Activated naive CD8-positive, alpha-beta T cell treated with anti-CD3 and anti-CD28 coated beads, Interleukin-2, amount 10 ng/mL, durations not matched to agents 7 days and 5 days (primary cell): ENCODE measurements at regions of chr10 and their contacts with region 1.

Region 1: GRCh38 chr10:97792141-97792721 is 20.4 kb upstream of the SFRP5 start:
- DNase-seq: peak; percentile 78
- ATAC-seq: peak; percentile 35
- H3K4me3 Mint-ChIP-seq: no peak overlapping the region
- H3K27ac Mint-ChIP-seq: peak overlapping the region; percentile 80
- H3K4me1 Mint-ChIP-seq: peaks cover 27% of the 10 kb centered on the region
- H3K27me3 Mint-ChIP-seq: no peaks in the 10 kb centered on the region

Region 2: DNA sequence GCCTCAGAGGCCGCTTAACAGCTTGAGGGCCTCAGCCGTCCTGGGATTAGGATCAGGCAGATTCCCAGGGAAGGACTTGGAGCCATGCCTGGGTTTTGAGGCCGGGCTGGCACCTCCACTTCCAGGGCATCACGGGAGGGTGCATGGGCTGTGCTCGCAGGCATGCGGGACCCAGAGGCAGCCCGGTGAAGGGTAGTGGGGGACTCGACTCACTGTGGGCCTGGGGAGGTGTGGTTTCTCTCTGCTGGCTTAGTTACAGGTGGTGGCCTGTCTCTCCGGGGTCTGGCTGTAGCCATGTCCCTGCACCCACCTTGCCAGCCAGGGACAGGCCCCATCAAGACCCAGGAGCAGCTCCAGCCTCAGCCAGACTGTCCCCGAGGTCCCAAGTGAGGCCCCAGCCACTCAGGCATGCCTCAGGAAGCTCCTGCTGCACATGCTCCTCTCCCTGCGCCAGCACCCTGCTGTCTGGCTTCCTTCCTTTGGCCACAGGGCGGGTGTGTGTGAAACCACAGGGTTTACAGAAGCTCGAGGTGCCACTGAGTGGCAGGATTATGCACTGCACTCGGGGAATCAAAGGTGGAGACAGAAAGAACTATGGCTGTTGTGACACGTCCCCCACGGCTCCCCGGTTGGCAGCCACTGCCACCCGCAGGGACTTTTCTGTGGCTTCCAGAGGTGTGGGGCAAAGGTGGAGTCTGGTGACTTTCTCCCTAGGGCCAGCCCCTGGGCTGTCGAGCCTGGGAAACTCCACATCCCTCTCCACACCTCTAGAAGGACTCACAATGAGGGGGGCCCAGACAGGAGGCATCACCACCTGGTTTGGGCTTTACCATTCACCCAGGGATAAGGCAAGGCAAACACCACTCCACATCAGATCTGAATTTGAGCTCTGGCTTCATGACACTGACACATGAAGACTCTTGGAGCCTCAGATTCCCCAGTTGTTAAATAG is 77.1 kb after region 1 on chr10:
- POLR2A ChIA-PET with region 1: interaction called, 16 read pairs
- DNase-seq: peak; percentile 83
- ATAC-seq: peak; percentile 99
- H3K4me3 Mint-ChIP-seq: peak overlapping the region; percentile 64
- H3K27ac Mint-ChIP-seq: peak overlapping the region; percentile 78
- H3K4me1 Mint-ChIP-seq: peaks cover 10% of the 10 kb centered on the region
- H3K27me3 Mint-ChIP-seq: peaks cover 11% of the 10 kb centered on the region